ENCODE measurements at regions of chr9 and their contacts with region 1.

Region 1: DNA sequence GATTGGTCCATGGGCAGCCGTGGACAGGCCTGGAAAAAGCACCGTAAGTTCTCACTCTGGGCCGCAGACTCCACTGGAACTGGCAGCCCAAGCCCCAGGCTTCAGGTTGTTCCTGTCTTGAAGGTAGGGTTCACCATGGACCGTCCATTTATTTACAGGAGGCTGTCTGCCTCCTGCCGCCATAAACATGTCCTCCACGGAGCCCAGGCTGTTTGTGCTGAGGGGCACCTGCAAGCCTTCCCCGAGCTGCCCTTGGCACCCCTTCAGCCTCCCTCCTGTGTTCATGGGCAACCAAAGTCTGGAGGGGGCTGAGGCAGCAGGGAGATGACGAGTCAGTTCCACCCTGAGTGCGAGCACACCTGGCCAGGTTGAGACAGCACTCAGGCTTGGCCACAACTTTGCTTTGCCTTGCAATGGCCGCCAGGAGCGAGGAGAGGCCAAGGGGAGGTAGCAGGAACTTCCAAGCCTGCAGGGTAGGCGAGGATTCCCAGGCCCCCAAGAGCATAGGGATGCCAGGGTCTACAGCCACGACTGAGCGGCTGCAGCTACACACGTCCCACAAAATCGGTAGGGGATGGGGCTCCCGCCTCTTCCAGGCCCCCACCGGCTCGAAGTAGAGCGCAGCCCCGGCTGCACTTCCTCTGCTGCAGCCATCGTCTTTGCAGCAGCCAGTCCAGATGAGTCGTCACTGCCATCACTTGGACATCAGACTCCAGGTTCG is 1625.6 kb upstream of the ACO1 start:
- DNase-seq: no peak
- H3K4me3 Mint-ChIP-seq: no peak overlapping the region
- H3K27ac Mint-ChIP-seq: no peak overlapping the region
- H3K4me1 Mint-ChIP-seq: no peaks in the 10 kb centered on the region
- H3K27me3 Mint-ChIP-seq: no peaks in the 10 kb centered on the region

Region 2: GRCh38 chr9:30661925-30662324 is 97.0 kb before region 1 on chr9:
- intact Hi-C with region 1: no loop called
- DNase-seq: no peak
- H3K4me3 Mint-ChIP-seq: no peak overlapping the region
- H3K27ac Mint-ChIP-seq: no peak overlapping the region
- H3K4me1 Mint-ChIP-seq: no peaks in the 10 kb centered on the region
- H3K27me3 Mint-ChIP-seq: no peaks in the 10 kb centered on the region

Region 3: DNA sequence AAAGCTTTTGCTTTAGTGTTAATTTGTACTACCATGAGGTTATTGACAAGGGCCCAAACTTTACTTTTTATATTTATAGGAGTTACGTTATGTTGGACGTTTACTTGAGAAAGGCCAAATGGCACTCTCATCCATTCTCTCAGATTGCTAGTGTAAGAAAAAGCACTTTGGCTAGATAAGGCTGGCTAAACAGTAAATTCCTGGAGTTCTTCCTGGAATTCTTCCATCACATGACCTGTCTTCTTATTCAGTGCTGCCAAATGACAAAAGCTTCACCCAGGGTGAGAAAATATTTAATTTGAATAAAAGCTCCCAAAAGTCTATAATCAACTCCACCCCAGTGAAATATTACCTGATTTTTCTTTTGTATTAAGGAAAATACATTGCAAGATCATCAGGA is 56.7 kb after region 1 on chr9:
- intact Hi-C with region 1: loop called (anchors 10 kb)
- DNase-seq: no peak
- H3K4me3 Mint-ChIP-seq: no peak overlapping the region
- H3K27ac Mint-ChIP-seq: no peak overlapping the region
- H3K4me1 Mint-ChIP-seq: no peaks in the 10 kb centered on the region
- H3K27me3 Mint-ChIP-seq: no peaks in the 10 kb centered on the region

Measured in activated T-helper 2 cell treated with anti-CD3 and anti-CD28 coated beads, Interferon-gamma antibody, Interleukin-2, Interleukin-4, amounts not matched to agents 10 μg/mL and 5 μg/mL and 100 μg/mL, durations not matched to agents 14 hours and 24 hours and 36 hours (primary cell).